T-cell (primary cell): ENCODE measurements at regions of chr6 and their contacts with region 1.

Region 1: GRCh38 chr6:106339334-106340029 is 13.9 kb upstream of the ATG5 start:
- DNase-seq: peak in 24 of 35 experiments; percentile 3 to 67 (median 22)
- ATAC-seq: peak; percentile 81 to 87 (median 86)
- H3K4me3 ChIP-seq: no peak overlapping the region
- H3K4me3 Mint-ChIP-seq: no peak overlapping the region
- H3K27ac ChIP-seq: no peak overlapping the region
- H3K27ac Mint-ChIP-seq: no peak overlapping the region
- H3K4me1 ChIP-seq: no peaks in the 10 kb centered on the region
- H3K4me1 Mint-ChIP-seq: peaks cover 0 to 5% (median 5%) of the 10 kb centered on the region in 3 donors
- H3K27me3 ChIP-seq: peaks cover 0 to 2% of the 10 kb centered on the region in 2 experiments
- H3K27me3 Mint-ChIP-seq: peaks cover 11 to 18% of the 10 kb centered on the region in 2 donors

Region 2: DNA sequence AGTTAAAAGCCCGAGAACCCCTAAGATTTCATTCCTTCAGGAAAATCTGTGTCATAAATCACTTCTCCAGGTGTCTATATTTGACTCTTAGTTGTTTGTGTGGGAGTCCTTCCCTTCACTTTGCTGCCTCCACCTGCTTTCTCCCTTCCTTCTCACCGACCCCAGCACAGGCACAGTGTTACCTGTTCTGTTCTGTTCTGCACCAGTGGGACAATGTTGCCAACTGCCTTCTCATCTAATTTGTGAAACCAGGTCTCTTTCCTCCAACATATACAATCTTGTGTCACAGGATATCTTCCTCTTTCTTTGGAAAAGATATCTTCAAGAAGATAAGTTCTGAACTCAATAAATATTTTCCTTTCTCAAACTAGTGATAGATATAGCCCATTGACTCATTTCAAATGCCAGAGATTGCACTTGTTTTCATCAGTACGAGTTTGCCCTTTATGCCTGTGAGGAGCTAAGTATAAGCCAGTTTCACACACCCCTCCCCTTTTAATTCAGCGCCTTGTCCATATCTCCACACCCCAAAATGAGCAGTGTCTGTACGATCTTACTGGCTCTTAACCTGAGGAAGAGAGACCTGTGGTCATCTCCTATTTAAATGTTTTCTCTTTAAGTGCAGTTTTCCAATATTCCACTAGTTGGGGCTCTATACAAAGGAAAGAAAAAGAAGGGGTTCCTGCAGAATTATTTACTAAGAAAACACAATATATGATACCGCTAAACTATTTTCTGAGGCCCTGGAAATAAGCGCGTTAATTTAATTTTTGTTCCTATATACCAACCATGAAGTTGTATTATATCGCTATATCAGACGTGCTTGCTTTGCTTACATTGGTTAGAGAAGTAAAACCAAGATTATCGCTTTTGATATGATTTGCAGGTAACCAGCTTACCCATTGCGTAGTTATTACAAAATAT is 855.0 kb before region 1 on chr6:
- CTCF ChIA-PET with region 1: no interaction called
- POLR2A ChIA-PET with region 1: interaction called in 1 of 2 experiments, 12 read pairs
- DNase-seq: peak in 2 of 35 experiments; percentile 8 to 61
- ATAC-seq: peak in 1 of 4 experiments; percentile 55
- H3K4me3 ChIP-seq: peak overlapping the region in 1 of 2 donors; percentile 5
- H3K4me3 Mint-ChIP-seq: peak overlapping the region in 1 of 3 donors; percentile 18
- H3K27ac ChIP-seq: peak overlapping the region; percentile 66
- H3K27ac Mint-ChIP-seq: peak overlapping the region in 1 of 2 donors; percentile 12
- H3K4me1 ChIP-seq: peaks cover 0 to 3% of the 10 kb centered on the region in 2 experiments
- H3K4me1 Mint-ChIP-seq: peaks cover 14 to 34% (median 19%) of the 10 kb centered on the region in 3 donors
- H3K27me3 ChIP-seq: no peaks in the 10 kb centered on the region
- H3K27me3 Mint-ChIP-seq: peaks cover 1 to 6% of the 10 kb centered on the region in 2 donors

Region 3: DNA sequence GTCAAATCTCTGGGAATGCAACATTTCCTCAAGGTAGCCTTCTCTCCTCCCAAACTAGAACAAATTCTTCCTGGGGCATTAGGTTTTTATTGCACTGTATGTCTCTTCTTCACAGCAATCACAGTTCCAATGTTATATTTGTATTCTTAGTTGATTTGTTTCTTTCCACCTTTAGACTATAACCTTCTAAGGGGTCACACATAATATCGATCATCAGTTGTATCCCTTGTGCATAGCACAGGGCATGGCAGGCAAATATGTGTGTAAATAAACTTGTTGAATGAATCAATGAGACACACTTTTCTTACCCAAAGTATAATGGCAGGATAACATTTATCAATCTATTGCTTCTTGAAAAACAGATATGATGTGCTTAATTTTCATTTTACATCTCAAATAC is 95.0 kb before region 1 on chr6:
- CTCF ChIA-PET with region 1: no interaction called
- POLR2A ChIA-PET with region 1: interaction called in 1 of 2 experiments, 12 read pairs
- DNase-seq: no peak
- ATAC-seq: no peak
- H3K4me3 ChIP-seq: no peak overlapping the region
- H3K4me3 Mint-ChIP-seq: no peak overlapping the region
- H3K27ac ChIP-seq: no peak overlapping the region
- H3K27ac Mint-ChIP-seq: no peak overlapping the region
- H3K4me1 ChIP-seq: no peaks in the 10 kb centered on the region
- H3K4me1 Mint-ChIP-seq: peaks cover 6 to 12% (median 10%) of the 10 kb centered on the region in 3 donors
- H3K27me3 ChIP-seq: no peaks in the 10 kb centered on the region
- H3K27me3 Mint-ChIP-seq: no peaks in the 10 kb centered on the region

Region 4: GRCh38 chr6:106325336-106326178 is 13.9 kb before region 1 on chr6 and contains the start of gene ATG5:
- CTCF ChIA-PET with region 1: interaction called, 3 to 16 read pairs
- POLR2A ChIA-PET with region 1: interaction called in 1 of 2 experiments, 12 read pairs
- DNase-seq: peak; percentile 99 to 100 (median 100)
- ATAC-seq: peak; percentile 93 to 95 (median 94)
- H3K4me3 ChIP-seq: peak within 1 kb of the TSS; percentile 82 to 84
- H3K4me3 Mint-ChIP-seq: peak within 1 kb of the TSS; percentile 97 to 100 (median 99)
- H3K27ac ChIP-seq: peak within 1 kb of the TSS; percentile 84
- H3K27ac Mint-ChIP-seq: peak within 1 kb of the TSS; percentile 94 to 96
- H3K4me1 ChIP-seq: peaks cover 15 to 25% of the 10 kb centered on the region in 2 experiments
- H3K4me1 Mint-ChIP-seq: peaks cover 42 to 53% (median 51%) of the 10 kb centered on the region in 3 donors
- H3K27me3 ChIP-seq: peaks cover 0 to under 1% of the 10 kb centered on the region in 2 experiments
- H3K27me3 Mint-ChIP-seq: peaks cover 16 to 19% of the 10 kb centered on the region in 2 donors
- total RNA-seq, gene ATG5: 20.4 to 28.7 (median 23.7) TPM

Region 5: GRCh38 chr6:106360410-106360988 is 21.0 kb after region 1 on chr6 and contains the start of gene CRYBG1:
- CTCF ChIA-PET with region 1: interaction called, 3 to 12 read pairs
- POLR2A ChIA-PET with region 1: no interaction called
- DNase-seq: peak; percentile 33 to 82 (median 62)
- ATAC-seq: peak; percentile 81 to 93 (median 84)
- H3K4me3 ChIP-seq: peak within 1 kb of the TSS; percentile 45 to 66
- H3K4me3 Mint-ChIP-seq: peak within 1 kb of the TSS; percentile 76 to 85 (median 78)
- H3K27ac ChIP-seq: no peak within 1 kb of the TSS
- H3K27ac Mint-ChIP-seq: no peak within 1 kb of the TSS
- H3K4me1 ChIP-seq: peaks cover 0 to 12% of the 10 kb centered on the region in 2 experiments
- H3K4me1 Mint-ChIP-seq: peaks cover 5 to 11% (median 9%) of the 10 kb centered on the region in 3 donors
- H3K27me3 ChIP-seq: peaks cover 5 to 28% of the 10 kb centered on the region in 2 experiments
- H3K27me3 Mint-ChIP-seq: peaks cover 40 to 47% of the 10 kb centered on the region in 2 donors
- total RNA-seq, gene CRYBG1: 26.4 to 50.1 (median 38.0) TPM

Region 6: DNA sequence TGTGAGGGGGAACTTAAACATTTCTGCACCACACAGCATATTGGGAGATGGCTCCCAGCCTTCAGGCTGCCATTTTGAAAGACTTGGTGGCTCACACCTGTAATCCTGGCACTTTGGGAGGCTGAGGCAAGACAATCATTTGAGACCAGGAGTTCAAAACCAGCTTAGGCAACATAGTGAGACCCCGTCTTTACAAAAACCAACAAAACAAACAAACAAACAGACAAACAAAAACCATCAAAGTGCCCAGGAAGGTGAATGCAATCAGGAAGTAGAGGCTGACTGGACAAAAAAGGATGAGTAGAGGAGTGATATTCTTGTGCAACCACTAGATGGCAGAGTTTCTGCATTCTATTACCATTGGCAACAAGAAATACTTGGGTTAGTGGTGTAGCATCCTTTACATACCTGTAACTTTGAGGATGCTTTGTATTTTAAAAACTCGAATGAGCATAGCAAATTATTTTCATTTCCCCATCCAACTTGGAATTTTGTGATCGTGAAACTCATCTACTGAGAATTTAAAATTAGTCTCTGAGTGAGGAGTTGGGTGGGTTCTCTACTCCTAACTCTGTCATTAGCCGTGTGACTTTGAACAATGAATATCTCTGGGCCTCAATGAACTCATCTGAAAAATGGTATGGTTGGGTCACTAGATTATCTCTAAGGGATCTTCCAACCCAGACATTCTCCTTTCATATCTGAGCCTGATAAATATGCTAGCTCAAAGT is 105.5 kb after region 1 on chr6:
- CTCF ChIA-PET with region 1: interaction called, 5 to 23 read pairs
- POLR2A ChIA-PET with region 1: no interaction called
- DNase-seq: peak in 17 of 35 experiments; percentile 1 to 82 (median 18)
- ATAC-seq: peak; percentile 69 to 86 (median 74)
- H3K4me3 ChIP-seq: no peak overlapping the region
- H3K4me3 Mint-ChIP-seq: no peak overlapping the region
- H3K27ac ChIP-seq: no peak overlapping the region
- H3K27ac Mint-ChIP-seq: peak overlapping the region in 1 of 2 donors; percentile 32
- H3K4me1 ChIP-seq: peaks cover 10% of the 10 kb centered on the region in 2 experiments
- H3K4me1 Mint-ChIP-seq: peaks cover 13 to 15% (median 14%) of the 10 kb centered on the region in 3 donors
- H3K27me3 ChIP-seq: peaks cover 2 to 4% of the 10 kb centered on the region in 2 experiments
- H3K27me3 Mint-ChIP-seq: peaks cover 27 to 31% of the 10 kb centered on the region in 2 donors

Region 7: DNA sequence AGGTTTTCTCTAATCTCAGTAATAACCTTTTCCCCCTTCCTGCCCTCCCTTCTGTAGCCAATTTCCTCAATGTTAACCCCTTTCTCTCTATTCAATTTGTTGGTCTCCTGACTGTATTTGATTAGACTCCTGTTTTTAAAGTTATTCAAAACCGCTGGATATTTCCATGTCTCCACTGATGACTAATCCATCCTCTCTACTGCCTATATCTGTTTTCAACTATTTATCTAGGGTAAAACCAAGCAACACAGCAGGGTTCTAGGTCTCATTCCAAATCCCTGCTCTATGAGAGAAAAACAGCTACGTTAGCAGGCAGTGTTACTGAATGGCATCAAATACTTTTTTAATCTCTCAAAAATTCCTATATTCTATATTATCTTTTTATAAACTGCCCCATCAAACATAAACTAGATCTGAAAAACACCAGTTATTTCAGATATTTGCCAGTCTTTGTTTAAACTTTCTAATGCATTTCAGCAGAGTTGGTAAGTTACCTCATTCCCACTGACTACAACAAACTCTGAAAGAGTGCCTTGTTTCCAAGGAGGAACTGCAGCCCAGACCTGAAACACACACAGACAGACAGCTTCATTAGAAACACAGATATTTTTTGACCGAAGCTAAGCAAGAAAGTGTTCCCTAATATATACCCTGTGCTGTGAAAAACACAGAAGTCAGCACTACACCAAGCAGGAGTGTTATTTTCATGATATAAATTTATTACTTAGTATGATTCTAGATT is 281.6 kb after region 1 on chr6:
- CTCF ChIA-PET with region 1: no interaction called
- POLR2A ChIA-PET with region 1: no interaction called
- DNase-seq: no peak
- ATAC-seq: no peak
- H3K4me3 ChIP-seq: no peak overlapping the region
- H3K4me3 Mint-ChIP-seq: no peak overlapping the region
- H3K27ac ChIP-seq: no peak overlapping the region
- H3K27ac Mint-ChIP-seq: no peak overlapping the region
- H3K4me1 ChIP-seq: no peaks in the 10 kb centered on the region
- H3K4me1 Mint-ChIP-seq: peaks cover 0 to 2% (median 0%) of the 10 kb centered on the region in 3 donors
- H3K27me3 ChIP-seq: no peaks in the 10 kb centered on the region
- H3K27me3 Mint-ChIP-seq: no peaks in the 10 kb centered on the region

Region 8: GRCh38 chr6:106979427-106979884 is 640.0 kb after region 1 on chr6:
- CTCF ChIA-PET with region 1: interaction called, 6 to 14 read pairs
- POLR2A ChIA-PET with region 1: no interaction called
- DNase-seq: peak; percentile 25 to 84 (median 63)
- ATAC-seq: peak; percentile 53 to 71 (median 62)
- H3K4me3 ChIP-seq: no peak overlapping the region
- H3K4me3 Mint-ChIP-seq: no peak overlapping the region
- H3K27ac ChIP-seq: no peak overlapping the region
- H3K27ac Mint-ChIP-seq: peak overlapping the region in 1 of 2 donors; percentile 1
- H3K4me1 ChIP-seq: peaks cover 0 to 9% of the 10 kb centered on the region in 2 experiments
- H3K4me1 Mint-ChIP-seq: peaks cover 0 to 7% (median 2%) of the 10 kb centered on the region in 3 donors
- H3K27me3 ChIP-seq: peaks cover 6 to 46% of the 10 kb centered on the region in 2 experiments
- H3K27me3 Mint-ChIP-seq: peaks cover 39 to 47% of the 10 kb centered on the region in 2 donors